Activated CD4-positive, alpha-beta T cell treated with anti-CD3 and anti-CD28 coated beads, Interleukin-2, amount 10 ng/mL, durations not matched to agents 7 days and 5 days (primary cell): ENCODE measurements at regions of chr1 and their contacts with region 1.

Region 1: DNA sequence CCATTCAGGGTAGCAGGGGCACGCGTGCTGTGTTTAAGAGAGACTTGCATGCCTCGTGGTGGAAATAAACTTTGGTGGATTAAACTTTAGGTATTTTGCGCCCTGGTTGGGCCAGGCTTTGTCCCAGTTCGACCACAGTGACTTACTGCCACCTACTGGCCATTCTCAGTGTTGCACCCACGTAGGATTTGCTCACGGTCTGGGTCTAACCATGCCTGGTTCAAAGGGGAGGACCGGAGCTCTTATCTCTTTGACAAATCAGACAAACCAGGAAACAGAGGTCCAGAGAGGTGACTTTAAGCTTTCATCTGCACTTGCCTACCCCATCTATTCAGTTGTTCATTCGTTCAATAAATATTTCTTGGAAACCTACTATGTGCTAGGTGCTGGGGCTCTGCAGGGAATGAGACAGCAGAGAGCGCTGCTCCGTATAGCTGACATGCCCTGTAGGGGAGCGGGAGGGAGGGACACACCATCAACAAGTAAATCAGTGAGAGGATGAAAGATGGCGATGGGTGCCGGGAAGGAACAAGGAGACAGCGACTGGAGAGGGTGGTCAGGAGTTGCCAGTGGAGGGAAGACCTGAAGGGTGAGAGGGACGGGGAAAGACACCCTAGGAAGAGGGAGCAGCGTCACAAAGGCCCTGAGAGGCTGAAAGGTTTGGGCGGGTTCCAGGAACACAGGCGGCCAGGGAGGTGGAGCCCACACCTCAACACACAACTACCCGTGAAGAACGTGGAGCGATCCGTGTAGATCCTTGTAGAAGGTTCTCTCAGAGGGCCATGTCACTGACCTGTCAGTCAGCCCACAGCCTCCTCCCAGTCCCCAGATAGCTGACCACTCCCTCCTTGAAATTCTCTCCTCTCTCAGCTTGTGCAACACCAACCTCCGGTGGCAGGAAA is 27.2 kb upstream of the TINAGL1 start:
- DNase-seq: peak; percentile 92
- H3K4me3 Mint-ChIP-seq: peak overlapping the region; percentile 33
- H3K27ac Mint-ChIP-seq: peak overlapping the region; percentile 81
- H3K4me1 Mint-ChIP-seq: peaks cover 12% of the 10 kb centered on the region
- H3K27me3 Mint-ChIP-seq: peaks cover 11% of the 10 kb centered on the region

Region 2: GRCh38 chr1:31394628-31395193 is 154.4 kb before region 1 on chr1:
- CTCF ChIA-PET with region 1: interaction called, 24 read pairs
- POLR2A ChIA-PET with region 1: no interaction called
- DNase-seq: peak; percentile 81
- H3K4me3 Mint-ChIP-seq: peak overlapping the region; percentile 74
- H3K27ac Mint-ChIP-seq: peak overlapping the region; percentile 25
- H3K4me1 Mint-ChIP-seq: peaks cover 12% of the 10 kb centered on the region
- H3K27me3 Mint-ChIP-seq: no peaks in the 10 kb centered on the region

Region 3: DNA sequence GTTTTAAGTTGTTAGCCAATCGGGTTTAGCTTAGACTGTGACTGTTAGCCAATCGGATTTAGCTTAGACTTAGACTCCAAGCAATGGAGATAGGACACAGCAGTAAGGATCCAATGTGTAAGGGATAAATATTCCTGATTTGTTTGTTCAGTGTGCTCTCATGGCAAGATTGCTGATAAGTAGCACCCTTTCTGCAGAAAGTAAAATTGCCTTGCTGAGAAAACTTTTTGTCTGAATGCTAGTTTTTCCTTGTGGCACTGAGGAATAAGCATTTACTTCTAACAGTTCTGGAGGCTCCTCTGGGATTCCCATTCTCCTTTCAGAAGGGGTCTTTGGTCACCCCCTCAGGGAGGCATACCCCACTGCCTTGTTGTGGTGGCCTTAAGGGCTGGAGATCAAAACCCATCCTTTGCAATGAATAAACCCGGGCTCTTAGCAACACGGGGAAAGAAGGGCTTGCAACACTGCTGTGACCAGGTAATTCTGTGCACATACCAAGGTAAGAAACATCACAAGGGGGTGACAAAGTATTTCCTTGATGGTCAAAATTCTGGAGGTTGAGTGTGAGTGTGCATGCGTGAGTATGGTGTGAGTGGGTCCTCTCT is 90.8 kb before region 1 on chr1:
- CTCF ChIA-PET with region 1: no interaction called
- POLR2A ChIA-PET with region 1: interaction called, 13 read pairs
- DNase-seq: no peak
- H3K4me3 Mint-ChIP-seq: no peak overlapping the region
- H3K27ac Mint-ChIP-seq: no peak overlapping the region
- H3K4me1 Mint-ChIP-seq: no peaks in the 10 kb centered on the region
- H3K27me3 Mint-ChIP-seq: peaks cover 25% of the 10 kb centered on the region

Region 4: DNA sequence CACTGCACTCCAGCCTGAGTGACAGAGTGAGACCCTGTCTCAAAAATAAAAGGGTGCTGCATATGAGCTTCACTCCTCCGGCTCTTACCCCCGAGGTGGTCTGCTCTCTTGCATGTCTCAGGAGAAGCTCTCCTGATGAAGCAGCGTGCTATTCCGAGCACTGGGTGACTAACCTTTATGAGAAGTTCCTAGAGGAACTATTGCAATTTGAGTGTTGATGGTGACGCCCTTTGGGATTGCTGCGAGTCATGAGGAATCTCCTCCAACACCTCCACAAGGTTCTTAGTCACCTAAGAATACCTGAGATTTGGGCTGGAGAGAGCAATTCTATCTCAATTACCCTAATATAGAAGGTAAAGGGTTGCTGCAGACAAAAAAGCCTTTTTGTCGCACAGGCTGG is 13.6 kb before region 1 on chr1:
- CTCF ChIA-PET with region 1: interaction called, 12 read pairs
- POLR2A ChIA-PET with region 1: no interaction called
- DNase-seq: no peak
- H3K4me3 Mint-ChIP-seq: peak overlapping the region; percentile 14
- H3K27ac Mint-ChIP-seq: no peak overlapping the region
- H3K4me1 Mint-ChIP-seq: peaks cover 12% of the 10 kb centered on the region
- H3K27me3 Mint-ChIP-seq: peaks cover 27% of the 10 kb centered on the region